PC-3 (cell line): ENCODE measurements at regions of chr19 and their contacts with region 1.

Region 1: GRCh38 chr19:40549007-40549708 is 27.5 kb upstream of the SHKBP1 start:
- DNase-seq: peak; percentile 68
- ATAC-seq: peak; percentile 90
- H3K4me3 ChIP-seq: peak overlapping the region; percentile 49; the same call in 1 of the 2 replicates
- H3K27ac ChIP-seq: no peak overlapping the region
- H3K4me1 ChIP-seq: no peaks in the 10 kb centered on the region; the same call in 1 of the 2 replicates
- H3K27me3 ChIP-seq: no peaks in the 10 kb centered on the region
- CTCF ChIP-seq: peak; percentile 40; the same call in 1 of the 2 replicates

Region 2: GRCh38 chr19:40598121-40598917 is 49.2 kb after region 1 on chr19:
- CTCF ChIA-PET with region 1: interaction called, 3 read pairs
- POLR2A ChIA-PET with region 1: no interaction called
- intact Hi-C with region 1: loop called (anchors 1 kb)
- DNase-seq: peak; percentile 89
- ATAC-seq: peak; percentile 49
- H3K4me3 ChIP-seq: peak overlapping the region; percentile 65
- H3K27ac ChIP-seq: 0 out of 2 replicates have a peak overlapping the region, but pooled peaks have one; percentile 9
- H3K4me1 ChIP-seq: peaks cover 34% of the 10 kb centered on the region
- H3K27me3 ChIP-seq: no peaks in the 10 kb centered on the region
- CTCF ChIP-seq: peak; percentile 92

Region 3: DNA sequence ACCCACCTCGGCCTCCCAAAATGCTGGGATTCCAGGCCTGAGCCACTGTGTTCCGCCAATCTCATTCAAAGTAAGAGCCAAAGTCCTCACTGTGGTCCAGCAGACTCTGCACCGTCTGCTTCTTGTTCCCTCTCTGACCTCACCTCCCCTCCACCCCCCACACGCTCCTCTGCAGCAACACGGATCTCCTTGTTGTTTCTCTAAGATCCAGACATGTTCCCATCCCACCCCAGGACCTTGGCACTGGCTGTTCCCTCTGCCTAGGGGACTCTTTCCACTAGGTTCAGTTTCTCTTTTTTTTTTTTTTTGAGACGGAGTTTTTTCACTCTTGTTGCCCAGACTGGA is 90.5 kb after region 1 on chr19:
- CTCF ChIA-PET with region 1: interaction called, 26 read pairs
- POLR2A ChIA-PET with region 1: no interaction called
- intact Hi-C with region 1: no loop called
- DNase-seq: no peak
- ATAC-seq: no peak
- H3K4me3 ChIP-seq: no peak overlapping the region
- H3K27ac ChIP-seq: no peak overlapping the region
- H3K4me1 ChIP-seq: no peaks in the 10 kb centered on the region
- H3K27me3 ChIP-seq: no peaks in the 10 kb centered on the region
- CTCF ChIP-seq: no peak